MCF 10A (cell line): ENCODE measurements at regions of chr15 and their contacts with region 1.

Region 1: DNA sequence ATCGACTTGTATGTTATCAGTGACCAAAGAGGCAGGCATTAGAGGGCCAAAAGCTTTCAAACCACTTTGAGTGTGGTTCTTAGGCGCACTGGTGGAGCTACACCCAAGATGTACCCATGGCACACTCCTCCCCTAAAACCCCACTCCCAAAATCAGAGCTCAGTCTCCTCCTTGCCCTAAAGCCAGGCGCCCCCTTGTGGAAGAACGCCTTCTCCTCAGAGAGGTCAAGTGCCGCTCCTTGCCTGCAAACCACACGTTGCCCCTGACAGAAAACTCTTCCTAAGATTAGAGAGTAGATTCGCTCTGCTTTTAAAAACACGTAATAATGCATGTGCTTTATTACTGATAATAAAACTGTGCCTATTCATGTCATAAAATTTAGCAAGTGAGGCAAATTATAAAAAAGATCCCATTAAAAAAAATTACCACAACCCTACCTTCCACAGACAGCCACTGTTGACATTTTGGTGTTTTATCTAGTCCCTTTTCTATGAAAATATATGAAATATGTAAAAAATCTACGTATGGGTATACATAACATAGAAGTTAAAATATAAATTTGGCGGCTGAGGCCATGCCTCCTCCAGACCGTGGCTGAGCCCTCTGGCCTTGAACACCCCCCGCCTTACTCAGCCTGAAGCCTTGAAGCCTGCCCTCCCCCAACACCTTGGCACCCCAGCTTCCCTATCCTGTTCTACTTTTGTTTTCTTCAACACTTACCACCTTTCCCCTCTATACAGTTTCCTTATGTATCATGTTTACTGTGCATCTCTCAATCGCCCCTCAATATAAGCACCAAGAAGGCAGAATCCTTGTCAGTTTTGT is 33.5 kb downstream of the BCL2L10 start:
- DNase-seq: peak; percentile 92
- H3K4me3 Mint-ChIP-seq: peak overlapping the region; percentile 58
- H3K27ac Mint-ChIP-seq: peak overlapping the region; percentile 96
- H3K4me1 Mint-ChIP-seq: peaks cover 45% of the 10 kb centered on the region
- H3K27me3 Mint-ChIP-seq: no peaks in the 10 kb centered on the region
- CTCF ChIP-seq: peak; percentile 85

Region 2: GRCh38 chr15:51782357-51782896 is 296.7 kb before region 1 on chr15:
- CTCF ChIA-PET with region 1: no interaction called
- POLR2A ChIA-PET with region 1: no interaction called
- intact Hi-C with region 1: loop called (anchors 10 kb)
- DNase-seq: peak; percentile 55
- H3K4me3 Mint-ChIP-seq: no peak overlapping the region
- H3K27ac Mint-ChIP-seq: no peak overlapping the region
- H3K4me1 Mint-ChIP-seq: peaks cover 16% of the 10 kb centered on the region
- H3K27me3 Mint-ChIP-seq: no peaks in the 10 kb centered on the region
- CTCF ChIP-seq: peak; percentile 59

Region 3: DNA sequence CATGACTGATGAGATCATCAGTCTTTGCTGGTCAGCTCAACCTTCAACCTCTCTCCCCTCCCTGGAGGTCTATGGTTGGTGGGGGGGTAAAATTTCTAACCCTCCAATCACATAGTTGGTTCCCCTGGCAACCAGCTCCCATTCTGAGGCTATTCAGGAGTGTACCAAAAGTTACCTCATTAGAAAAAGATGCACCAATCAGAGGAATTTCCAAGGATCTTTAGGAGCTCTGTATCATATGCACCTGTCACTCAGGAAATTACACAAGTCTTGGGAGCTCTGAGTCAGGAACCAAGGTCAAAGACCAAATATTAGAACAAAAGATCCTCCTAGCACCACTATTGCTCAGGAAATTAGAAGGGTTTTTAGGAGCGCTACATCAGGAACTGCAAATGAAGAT is 86.1 kb before region 1 on chr15:
- CTCF ChIA-PET with region 1: interaction called, 10 read pairs
- POLR2A ChIA-PET with region 1: interaction called, 21 read pairs
- intact Hi-C with region 1: no loop called
- DNase-seq: peak; percentile 71
- H3K4me3 Mint-ChIP-seq: no peak overlapping the region
- H3K27ac Mint-ChIP-seq: no peak overlapping the region
- H3K4me1 Mint-ChIP-seq: peaks cover 28% of the 10 kb centered on the region
- H3K27me3 Mint-ChIP-seq: no peaks in the 10 kb centered on the region
- CTCF ChIP-seq: no peak

Region 4: DNA sequence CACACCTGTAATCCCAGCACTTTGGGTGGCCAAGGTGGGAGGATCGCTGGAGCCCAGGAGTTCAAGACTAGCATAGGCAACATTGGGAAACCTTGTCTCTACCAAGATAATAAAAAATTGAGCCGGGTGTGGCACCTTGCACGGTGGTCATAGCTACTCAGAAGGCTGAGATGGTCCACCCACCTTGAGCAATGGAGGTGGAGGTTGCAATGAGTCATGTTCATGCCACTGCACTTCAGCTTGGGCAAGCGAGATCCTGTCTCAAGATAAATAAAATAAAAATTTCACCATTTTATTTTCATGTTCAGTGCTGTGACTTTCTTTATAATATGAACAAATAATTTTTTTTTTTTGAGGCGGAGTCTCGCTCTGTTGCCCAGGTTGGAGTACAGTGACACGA is 47.5 kb before region 1 on chr15:
- CTCF ChIA-PET with region 1: interaction called, 4 read pairs
- POLR2A ChIA-PET with region 1: interaction called, 546 read pairs
- intact Hi-C with region 1: no loop called
- DNase-seq: peak; percentile 95
- H3K4me3 Mint-ChIP-seq: no peak overlapping the region
- H3K27ac Mint-ChIP-seq: peak overlapping the region; percentile 31
- H3K4me1 Mint-ChIP-seq: peaks cover 16% of the 10 kb centered on the region
- H3K27me3 Mint-ChIP-seq: no peaks in the 10 kb centered on the region
- CTCF ChIP-seq: no peak

Region 5: GRCh38 chr15:52093539-52094502 is 14.7 kb after region 1 on chr15:
- CTCF ChIA-PET with region 1: interaction called, 18 read pairs
- POLR2A ChIA-PET with region 1: interaction called, 214 read pairs
- intact Hi-C with region 1: loop called (anchors 1 kb)
- DNase-seq: peak; percentile 96
- H3K4me3 Mint-ChIP-seq: peak overlapping the region; percentile 48
- H3K27ac Mint-ChIP-seq: peak overlapping the region; percentile 99
- H3K4me1 Mint-ChIP-seq: peaks cover 34% of the 10 kb centered on the region
- H3K27me3 Mint-ChIP-seq: no peaks in the 10 kb centered on the region
- CTCF ChIP-seq: no peak

Region 6: GRCh38 chr15:52208306-52208946 is 129.3 kb after region 1 on chr15:
- CTCF ChIA-PET with region 1: interaction called, 3 read pairs
- POLR2A ChIA-PET with region 1: no interaction called
- intact Hi-C with region 1: loop called (anchors 1 kb)
- DNase-seq: peak; percentile 73
- H3K4me3 Mint-ChIP-seq: no peak overlapping the region
- H3K27ac Mint-ChIP-seq: no peak overlapping the region
- H3K4me1 Mint-ChIP-seq: no peaks in the 10 kb centered on the region
- H3K27me3 Mint-ChIP-seq: no peaks in the 10 kb centered on the region
- CTCF ChIP-seq: peak; percentile 83

Region 7: GRCh38 chr15:52234596-52235541 is 155.8 kb after region 1 on chr15:
- CTCF ChIA-PET with region 1: no interaction called
- POLR2A ChIA-PET with region 1: no interaction called
- intact Hi-C with region 1: no loop called
- DNase-seq: no peak
- H3K4me3 Mint-ChIP-seq: no peak overlapping the region
- H3K27ac Mint-ChIP-seq: no peak overlapping the region
- H3K4me1 Mint-ChIP-seq: no peaks in the 10 kb centered on the region
- H3K27me3 Mint-ChIP-seq: no peaks in the 10 kb centered on the region
- CTCF ChIP-seq: no peak